GM12878 (cell line): ENCODE measurements at regions of chr1 and their contacts with region 1.

Region 1: GRCh38 chr1:28078680-28079626 is 9.5 kb downstream of the EYA3 start:
- DNase-seq: no peak
- ATAC-seq: peak; percentile 60
- H3K4me3 ChIP-seq: no peak overlapping the region
- H3K27ac ChIP-seq: no peak overlapping the region
- H3K4me1 ChIP-seq: peaks cover 36% of the 10 kb centered on the region
- H3K27me3 ChIP-seq: no peaks in the 10 kb centered on the region
- CTCF ChIP-seq: no peak
- EP300 ChIP-seq: no peak
- POLR2A ChIP-seq: no peak
- RAD21 ChIP-seq: no peak

Region 2: DNA sequence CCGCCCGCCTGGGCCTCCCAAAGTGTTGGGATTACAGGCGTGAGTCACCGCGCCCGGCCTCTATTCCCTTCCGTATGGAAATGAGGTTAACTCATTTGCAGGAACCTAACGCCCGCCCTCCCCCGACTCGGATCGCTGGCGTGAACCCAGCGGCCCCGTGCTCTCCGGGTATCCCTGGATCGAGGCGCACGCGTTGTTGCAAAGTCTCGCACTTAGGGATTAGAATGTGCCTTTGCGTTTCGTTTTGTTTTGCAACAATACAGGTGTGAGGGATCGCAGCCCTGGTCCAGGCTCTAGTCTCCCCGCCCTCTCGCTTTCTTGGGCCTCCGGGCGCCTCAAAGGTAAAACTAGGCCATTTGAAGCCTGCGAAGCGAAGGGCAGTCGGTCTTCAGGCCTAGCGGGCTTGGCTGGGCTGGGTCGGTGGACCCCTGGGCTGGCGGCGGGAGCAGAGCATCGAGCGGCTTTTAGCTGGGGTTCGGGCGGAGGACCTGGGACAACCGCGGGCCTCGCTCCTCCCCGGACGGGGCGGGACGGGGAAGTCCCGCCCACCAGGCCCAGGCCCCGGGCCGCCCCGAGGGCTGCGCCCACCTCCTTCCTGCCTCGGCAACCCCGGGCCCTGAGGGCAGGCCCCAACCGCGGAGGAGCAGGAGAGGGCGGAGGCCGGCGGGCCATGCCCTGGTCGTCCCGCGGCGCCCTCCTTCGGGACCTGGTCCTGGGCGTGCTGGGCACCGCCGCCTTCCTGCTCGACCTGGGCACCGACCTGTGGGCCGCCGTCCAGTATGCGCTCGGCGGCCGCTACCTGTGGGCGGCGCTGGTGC is 119.3 kb before region 1 on chr1 and contains the start of gene XKR8:
- CTCF ChIA-PET with region 1: no interaction called
- POLR2A ChIA-PET with region 1: no interaction called
- RAD21 ChIA-PET with region 1: no interaction called
- SMC1A ChIA-PET with region 1: no interaction called
- in situ Hi-C with region 1: no loop called
- intact Hi-C with region 1: no loop called
- DNase-seq: peak; percentile 31
- ATAC-seq: peak; percentile 98
- H3K4me3 ChIP-seq: peak within 1 kb of the TSS; percentile 82
- H3K27ac ChIP-seq: 0 out of 2 replicates have a peak within 1 kb of the TSS, but pooled peaks have one; percentile 31
- H3K4me1 ChIP-seq: peaks cover 4% of the 10 kb centered on the region
- H3K27me3 ChIP-seq: no peaks in the 10 kb centered on the region
- CTCF ChIP-seq: peak; percentile 44 to 48 (median 47); a peak in 3 of 6 replicates
- EP300 ChIP-seq: no peak
- POLR2A ChIP-seq: peak; percentile 82
- RAD21 ChIP-seq: no peak
- polyA plus RNA-seq, gene XKR8: 0.80 to 1.1 TPM

Region 3: GRCh38 chr1:28056129-28056925 is 22.6 kb before region 1 on chr1:
- CTCF ChIA-PET with region 1: interaction called, 7 read pairs
- POLR2A ChIA-PET with region 1: interaction called, 10 read pairs
- RAD21 ChIA-PET with region 1: interaction called, 65 read pairs
- SMC1A ChIA-PET with region 1: interaction called, 86 read pairs
- in situ Hi-C with region 1: no loop called
- intact Hi-C with region 1: no loop called
- DNase-seq: peak; percentile 69
- ATAC-seq: peak; percentile 94
- H3K4me3 ChIP-seq: no peak overlapping the region
- H3K27ac ChIP-seq: peak overlapping the region; percentile 20; the same call in 1 of the 2 replicates
- H3K4me1 ChIP-seq: no peaks in the 10 kb centered on the region; the same call in 1 of the 2 replicates
- H3K27me3 ChIP-seq: no peaks in the 10 kb centered on the region
- CTCF ChIP-seq: no peak
- EP300 ChIP-seq: peak in 1 of 2 experiments; percentile 25; a peak in 1 of 4 replicates
- POLR2A ChIP-seq: no peak
- RAD21 ChIP-seq: no peak

Region 4: GRCh38 chr1:28067523-28068090 is 11.3 kb before region 1 on chr1:
- CTCF ChIA-PET with region 1: interaction called, 7 read pairs
- POLR2A ChIA-PET with region 1: interaction called, 11 read pairs
- RAD21 ChIA-PET with region 1: interaction called, 5 read pairs
- SMC1A ChIA-PET with region 1: interaction called, 44 read pairs
- in situ Hi-C with region 1: no loop called
- intact Hi-C with region 1: no loop called
- DNase-seq: no peak
- ATAC-seq: no peak
- H3K4me3 ChIP-seq: no peak overlapping the region
- H3K27ac ChIP-seq: no peak overlapping the region
- H3K4me1 ChIP-seq: peaks cover 24% of the 10 kb centered on the region
- H3K27me3 ChIP-seq: no peaks in the 10 kb centered on the region
- CTCF ChIP-seq: no peak
- EP300 ChIP-seq: no peak
- POLR2A ChIP-seq: no peak
- RAD21 ChIP-seq: no peak

Region 5: GRCh38 chr1:28339551-28339950 is 260.6 kb after region 1 on chr1:
- CTCF ChIA-PET with region 1: no interaction called
- POLR2A ChIA-PET with region 1: no interaction called
- RAD21 ChIA-PET with region 1: no interaction called
- SMC1A ChIA-PET with region 1: no interaction called
- in situ Hi-C with region 1: no loop called
- intact Hi-C with region 1: no loop called
- DNase-seq: no peak
- ATAC-seq: no peak
- H3K4me3 ChIP-seq: no peak overlapping the region
- H3K27ac ChIP-seq: no peak overlapping the region
- H3K4me1 ChIP-seq: no peaks in the 10 kb centered on the region
- H3K27me3 ChIP-seq: no peaks in the 10 kb centered on the region
- CTCF ChIP-seq: no peak
- EP300 ChIP-seq: no peak
- POLR2A ChIP-seq: no peak
- RAD21 ChIP-seq: no peak